Prostate gland (tissue), 2 donors: ENCODE measurements at regions of chr14 and their contacts with region 1.

Region 1: DNA sequence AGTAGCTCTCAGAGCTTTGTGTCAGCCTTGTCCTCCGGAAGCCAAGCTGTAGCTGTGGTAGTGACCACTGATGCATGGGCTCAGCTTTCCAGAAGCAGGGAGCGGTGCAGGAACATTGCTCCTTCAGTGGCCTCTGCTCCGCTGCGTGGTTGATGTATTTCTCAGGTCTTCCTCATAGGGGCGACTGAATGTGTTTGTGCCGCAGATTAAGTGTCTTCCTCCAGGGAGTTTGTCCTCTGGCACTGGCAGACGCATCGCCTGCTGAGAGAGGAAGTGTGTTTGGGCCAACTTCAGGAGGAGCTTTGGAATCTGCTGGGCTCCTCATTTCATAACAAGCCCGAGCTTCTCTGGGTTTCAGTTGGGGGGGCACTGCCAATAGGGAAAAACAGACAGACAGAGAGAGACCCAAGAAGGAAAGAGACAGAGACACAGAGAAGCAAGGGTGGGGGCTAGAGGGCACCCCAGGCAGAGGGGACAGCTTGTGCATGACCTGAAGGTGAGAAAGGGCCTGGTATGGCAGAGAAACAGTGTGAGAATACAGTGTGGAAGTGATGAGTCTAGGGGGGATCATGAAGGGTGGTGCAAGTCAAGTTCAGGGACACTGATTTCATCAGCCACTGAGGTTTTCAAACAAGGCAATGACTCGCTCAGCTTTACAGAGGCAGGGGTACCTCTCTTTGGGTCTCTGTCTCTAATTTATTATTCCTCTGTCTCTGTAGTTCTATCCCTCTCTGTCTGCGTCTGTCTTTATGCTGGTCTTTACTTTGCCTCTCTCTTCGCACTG is 69.4 kb upstream of the PRIMA1 start:
- DNase-seq: peak; percentile 30
- H3K4me3 ChIP-seq: no peak overlapping the region
- H3K27ac ChIP-seq: peak overlapping the region; percentile 6 to 7
- H3K4me1 ChIP-seq: peaks cover 2% of the 10 kb centered on the region
- H3K27me3 ChIP-seq: no peaks in the 10 kb centered on the region
- CTCF ChIP-seq: no peak
- POLR2A ChIP-seq: no peak

Region 2: DNA sequence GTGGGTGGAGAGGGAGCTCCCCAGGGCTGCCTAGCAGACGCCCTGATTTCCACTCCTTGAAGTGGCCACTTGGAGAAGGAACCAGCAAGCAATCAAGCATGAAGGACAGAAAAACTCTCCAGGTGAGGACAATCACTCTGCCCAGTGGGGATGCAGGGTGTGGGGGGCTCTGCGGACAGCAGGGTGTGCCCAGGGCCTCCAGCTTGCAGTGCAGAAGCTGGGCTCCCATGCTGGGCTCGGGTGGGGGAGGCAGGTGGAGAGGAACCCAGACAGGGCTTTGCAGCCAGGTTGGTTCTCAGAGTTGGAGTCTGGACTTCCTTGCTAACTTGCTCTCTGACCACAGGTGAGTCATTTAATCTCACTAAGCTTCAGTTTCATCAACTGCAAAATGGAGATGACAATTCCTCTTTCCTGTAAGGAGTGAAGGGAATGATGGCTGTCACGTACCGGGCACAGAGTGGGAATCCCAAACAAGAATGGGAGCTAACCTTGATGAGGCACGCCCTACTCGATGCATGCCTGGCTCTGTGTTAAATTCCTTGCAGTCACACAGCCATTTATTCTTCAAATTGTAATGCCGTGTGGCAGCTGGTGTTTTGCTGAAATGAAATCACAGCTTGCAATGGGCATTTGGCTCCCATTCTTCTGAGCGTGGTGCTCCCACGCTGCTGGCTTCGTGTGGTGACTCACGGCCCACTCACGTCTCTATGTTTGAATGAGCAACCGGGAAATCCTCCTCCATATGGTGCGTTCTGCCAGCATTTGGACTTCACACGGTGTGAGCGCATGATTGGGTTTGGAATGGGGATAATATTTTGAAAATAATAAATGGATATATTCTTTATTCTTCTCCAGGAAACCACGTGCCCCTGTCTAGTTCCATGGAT is 144.6 kb before region 1 on chr14:
- intact Hi-C with region 1: no loop called
- DNase-seq: no peak
- H3K4me3 ChIP-seq: no peak overlapping the region
- H3K27ac ChIP-seq: no peak overlapping the region
- H3K4me1 ChIP-seq: no peaks in the 10 kb centered on the region
- H3K27me3 ChIP-seq: no peaks in the 10 kb centered on the region
- CTCF ChIP-seq: no peak
- POLR2A ChIP-seq: no peak

Region 3: GRCh38 chr14:93870377-93870776 is 12.7 kb after region 1 on chr14:
- intact Hi-C with region 1: no loop called
- DNase-seq: no peak
- H3K4me3 ChIP-seq: no peak overlapping the region
- H3K27ac ChIP-seq: no peak overlapping the region
- H3K4me1 ChIP-seq: no peaks in the 10 kb centered on the region
- H3K27me3 ChIP-seq: no peaks in the 10 kb centered on the region
- CTCF ChIP-seq: no peak
- POLR2A ChIP-seq: no peak

Region 4: GRCh38 chr14:93892923-93893558 is 35.3 kb after region 1 on chr14:
- intact Hi-C with region 1: loop called (anchors 5 kb)
- DNase-seq: peak; percentile 62
- H3K4me3 ChIP-seq: no peak overlapping the region
- H3K27ac ChIP-seq: no peak overlapping the region
- H3K4me1 ChIP-seq: no peaks in the 10 kb centered on the region
- H3K27me3 ChIP-seq: peaks cover 3% of the 10 kb centered on the region
- CTCF ChIP-seq: peak; percentile 93 to 96 (median 94)
- POLR2A ChIP-seq: no peak

Region 5: DNA sequence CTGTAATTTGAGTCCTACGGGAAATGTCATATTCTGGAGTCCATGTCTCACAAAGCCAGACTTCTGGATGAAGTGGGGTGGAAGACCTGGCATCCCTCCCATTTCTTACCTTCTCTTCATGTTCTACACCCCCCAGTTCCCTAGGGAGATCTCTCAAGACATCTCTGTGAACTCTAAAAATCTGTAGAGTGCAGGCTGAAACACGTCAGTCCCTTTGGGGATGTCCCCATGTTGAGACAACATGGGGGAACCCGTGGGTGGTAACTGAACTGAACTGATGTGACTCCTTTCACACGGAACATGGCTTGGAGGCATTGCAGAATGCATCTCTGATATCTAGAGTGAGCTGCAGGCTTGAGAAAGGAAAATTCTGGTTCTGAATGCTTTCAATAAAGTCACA is 636.4 kb after region 1 on chr14:
- intact Hi-C with region 1: no loop called
- DNase-seq: no peak
- H3K4me3 ChIP-seq: no peak overlapping the region
- H3K27ac ChIP-seq: no peak overlapping the region
- H3K4me1 ChIP-seq: no peaks in the 10 kb centered on the region
- H3K27me3 ChIP-seq: no peaks in the 10 kb centered on the region
- CTCF ChIP-seq: no peak
- POLR2A ChIP-seq: no peak